PC-9 (cell line): ENCODE measurements at regions of chr5 and their contacts with region 1.

Region 1: DNA sequence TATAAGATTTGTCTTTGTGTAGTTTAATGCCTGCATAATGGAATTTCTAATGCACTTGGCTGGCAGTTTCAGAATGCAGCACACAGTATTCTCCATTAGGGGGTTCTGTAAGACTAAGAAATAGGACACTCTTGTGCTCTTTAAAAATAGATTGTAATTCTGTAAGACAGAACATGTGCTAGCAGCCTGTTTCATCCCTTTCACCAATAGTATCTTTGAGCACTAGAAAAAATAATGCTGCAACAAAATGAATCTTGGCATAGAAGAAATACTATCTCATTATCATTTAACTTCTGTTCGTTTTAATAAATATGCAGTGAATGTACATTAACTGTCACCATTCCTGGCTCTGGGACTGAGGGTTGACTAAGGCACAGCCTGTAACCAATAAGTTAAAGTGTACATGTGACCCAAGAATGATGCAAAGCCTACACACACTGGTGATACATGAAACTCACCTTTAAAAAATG is 23.8 kb upstream of the ZNF622 start:
- DNase-seq: peak; percentile 41 to 64
- H3K4me3 ChIP-seq: no peak overlapping the region
- H3K27ac ChIP-seq: no peak overlapping the region
- H3K4me1 ChIP-seq: peaks cover 26% of the 10 kb centered on the region
- H3K27me3 ChIP-seq: no peaks in the 10 kb centered on the region
- CTCF ChIP-seq: peak; percentile 88

Region 2: GRCh38 chr5:16304846-16305245 is 184.5 kb before region 1 on chr5:
- CTCF ChIA-PET with region 1: no interaction called
- POLR2A ChIA-PET with region 1: no interaction called
- intact Hi-C with region 1: no loop called
- DNase-seq: no peak
- H3K4me3 ChIP-seq: no peak overlapping the region
- H3K27ac ChIP-seq: no peak overlapping the region
- H3K4me1 ChIP-seq: no peaks in the 10 kb centered on the region
- H3K27me3 ChIP-seq: no peaks in the 10 kb centered on the region
- CTCF ChIP-seq: no peak

Region 3: DNA sequence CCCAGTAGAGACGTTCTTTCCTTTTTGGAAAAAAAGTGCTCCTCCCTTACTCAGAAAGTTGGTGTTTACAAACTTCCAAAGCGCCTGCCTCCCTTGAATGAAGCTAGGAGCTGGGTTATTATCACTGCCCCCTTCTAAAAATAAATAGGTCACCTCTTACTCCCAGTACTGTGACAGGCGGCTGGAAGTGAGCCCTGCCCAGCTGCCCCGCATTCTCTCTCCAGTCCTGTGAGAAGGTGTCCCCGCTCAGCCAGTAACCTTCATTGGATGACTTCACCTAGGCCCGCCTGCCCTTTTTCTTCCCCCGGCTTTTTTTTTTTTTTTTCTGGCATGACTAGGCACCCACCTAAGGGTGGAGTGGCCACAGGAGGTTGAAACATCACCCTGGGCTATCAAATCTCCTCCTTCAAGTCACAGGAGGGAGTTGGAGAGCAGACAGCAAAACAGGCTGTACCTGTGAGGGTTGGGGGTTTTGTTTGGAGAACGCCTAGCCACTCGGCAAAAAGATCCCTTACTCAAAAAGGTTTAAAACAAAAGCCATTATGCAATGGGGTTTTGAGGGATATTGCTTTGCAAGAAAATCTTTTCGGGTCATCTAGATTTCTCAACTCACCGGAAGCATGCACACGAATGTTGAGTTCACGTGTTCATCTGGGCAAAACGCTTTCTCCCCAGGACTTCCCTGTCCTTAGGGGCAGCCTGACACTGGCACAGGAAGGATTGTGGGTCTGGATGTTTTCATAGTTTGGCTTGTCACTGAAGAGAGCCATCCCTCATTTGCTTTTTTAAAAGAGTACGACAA is 19.6 kb after region 1 on chr5:
- CTCF ChIA-PET with region 1: interaction called, 4 read pairs
- POLR2A ChIA-PET with region 1: no interaction called
- intact Hi-C with region 1: loop called (anchors 1 kb)
- DNase-seq: peak; percentile 96 to 97
- H3K4me3 ChIP-seq: peak overlapping the region; percentile 53
- H3K27ac ChIP-seq: peak overlapping the region; percentile 82
- H3K4me1 ChIP-seq: peaks cover 26% of the 10 kb centered on the region
- H3K27me3 ChIP-seq: no peaks in the 10 kb centered on the region
- CTCF ChIP-seq: no peak

Region 4: GRCh38 chr5:16552666-16553343 is 63.4 kb after region 1 on chr5:
- CTCF ChIA-PET with region 1: interaction called, 18 read pairs
- POLR2A ChIA-PET with region 1: no interaction called
- intact Hi-C with region 1: loop called (anchors 1 kb)
- DNase-seq: peak; percentile 68 to 87
- H3K4me3 ChIP-seq: no peak overlapping the region
- H3K27ac ChIP-seq: no peak overlapping the region
- H3K4me1 ChIP-seq: no peaks in the 10 kb centered on the region
- H3K27me3 ChIP-seq: no peaks in the 10 kb centered on the region
- CTCF ChIP-seq: peak; percentile 86

Region 5: GRCh38 chr5:16585041-16585667 is 95.8 kb after region 1 on chr5:
- CTCF ChIA-PET with region 1: interaction called, 15 read pairs
- POLR2A ChIA-PET with region 1: no interaction called
- intact Hi-C with region 1: no loop called
- DNase-seq: no peak
- H3K4me3 ChIP-seq: no peak overlapping the region
- H3K27ac ChIP-seq: no peak overlapping the region
- H3K4me1 ChIP-seq: no peaks in the 10 kb centered on the region
- H3K27me3 ChIP-seq: no peaks in the 10 kb centered on the region
- CTCF ChIP-seq: peak; percentile 69

Region 6: DNA sequence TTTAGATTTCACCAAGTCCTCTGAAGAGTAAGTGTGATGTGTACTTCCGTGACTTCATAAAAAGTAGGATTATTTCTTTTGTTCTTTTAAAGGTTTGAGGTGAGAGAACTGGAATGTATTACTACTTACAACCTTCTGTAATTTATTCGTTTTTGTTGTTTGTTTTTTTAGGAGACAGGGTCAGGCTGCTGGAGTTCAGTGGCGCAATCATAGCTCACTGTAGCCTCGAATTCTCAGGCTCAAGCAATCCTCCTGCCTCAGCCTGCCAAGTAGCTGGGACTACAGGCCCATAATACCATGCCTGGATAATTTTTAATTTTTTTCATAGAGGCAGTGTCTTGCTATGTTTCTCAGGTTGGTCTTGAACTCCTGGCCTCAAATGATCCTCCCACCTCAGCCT is 195.7 kb after region 1 on chr5:
- CTCF ChIA-PET with region 1: no interaction called
- POLR2A ChIA-PET with region 1: no interaction called
- intact Hi-C with region 1: loop called (anchors 5 kb)
- DNase-seq: no peak
- H3K4me3 ChIP-seq: no peak overlapping the region
- H3K27ac ChIP-seq: no peak overlapping the region
- H3K4me1 ChIP-seq: no peaks in the 10 kb centered on the region
- H3K27me3 ChIP-seq: no peaks in the 10 kb centered on the region
- CTCF ChIP-seq: no peak

Region 7: DNA sequence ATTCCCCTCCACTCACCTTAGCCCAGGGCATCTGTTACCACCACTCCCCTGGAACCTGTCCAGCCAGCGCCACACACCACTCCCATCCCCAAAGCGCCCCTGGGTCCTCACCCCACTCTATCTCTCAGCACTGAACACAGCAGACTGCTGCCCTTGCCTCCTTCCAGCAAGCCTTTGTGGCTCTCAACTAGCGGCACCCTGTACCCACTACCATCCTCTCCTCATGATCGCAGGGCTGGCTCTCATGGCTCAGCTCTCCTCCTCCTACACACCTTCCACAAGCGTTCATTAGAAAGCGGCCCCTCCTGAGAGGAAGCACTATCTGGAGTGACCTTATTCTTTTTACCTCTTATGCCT is 714.8 kb after region 1 on chr5:
- CTCF ChIA-PET with region 1: no interaction called
- POLR2A ChIA-PET with region 1: no interaction called
- intact Hi-C with region 1: loop called (anchors 1 kb)
- DNase-seq: no peak
- H3K4me3 ChIP-seq: no peak overlapping the region
- H3K27ac ChIP-seq: no peak overlapping the region
- H3K4me1 ChIP-seq: no peaks in the 10 kb centered on the region
- H3K27me3 ChIP-seq: no peaks in the 10 kb centered on the region
- CTCF ChIP-seq: no peak